H1 (cell line): ENCODE measurements at regions of chr11 and their contacts with region 1.

Region 1: GRCh38 chr11:1694064-1694845 is 2.7 kb upstream of the KRTAP5-6 start:
- DNase-seq: peak; percentile 84 to 98
- H3K4me3 ChIP-seq: peak overlapping the region in 3 of 4 experiments; percentile 29 to 59 (median 45); a peak in 3 of 8 replicates
- H3K27ac ChIP-seq: no peak overlapping the region
- H3K4me1 ChIP-seq: peaks cover 0 to 10% (median 3%) of the 10 kb centered on the region in 4 experiments; a peak in 3 of 7 replicates
- H3K27me3 ChIP-seq: peaks cover 0 to 7% (median 0%) of the 10 kb centered on the region in 4 experiments; a peak in 3 of 7 replicates
- CTCF ChIP-seq: peak; percentile 81 to 97 (median 86)
- EP300 ChIP-seq: peak in 1 of 2 experiments; percentile 49; a peak in 1 of 3 replicates
- POLR2A ChIP-seq: no peak
- RAD21 ChIP-seq: peak; percentile 91 to 95

Region 2: DNA sequence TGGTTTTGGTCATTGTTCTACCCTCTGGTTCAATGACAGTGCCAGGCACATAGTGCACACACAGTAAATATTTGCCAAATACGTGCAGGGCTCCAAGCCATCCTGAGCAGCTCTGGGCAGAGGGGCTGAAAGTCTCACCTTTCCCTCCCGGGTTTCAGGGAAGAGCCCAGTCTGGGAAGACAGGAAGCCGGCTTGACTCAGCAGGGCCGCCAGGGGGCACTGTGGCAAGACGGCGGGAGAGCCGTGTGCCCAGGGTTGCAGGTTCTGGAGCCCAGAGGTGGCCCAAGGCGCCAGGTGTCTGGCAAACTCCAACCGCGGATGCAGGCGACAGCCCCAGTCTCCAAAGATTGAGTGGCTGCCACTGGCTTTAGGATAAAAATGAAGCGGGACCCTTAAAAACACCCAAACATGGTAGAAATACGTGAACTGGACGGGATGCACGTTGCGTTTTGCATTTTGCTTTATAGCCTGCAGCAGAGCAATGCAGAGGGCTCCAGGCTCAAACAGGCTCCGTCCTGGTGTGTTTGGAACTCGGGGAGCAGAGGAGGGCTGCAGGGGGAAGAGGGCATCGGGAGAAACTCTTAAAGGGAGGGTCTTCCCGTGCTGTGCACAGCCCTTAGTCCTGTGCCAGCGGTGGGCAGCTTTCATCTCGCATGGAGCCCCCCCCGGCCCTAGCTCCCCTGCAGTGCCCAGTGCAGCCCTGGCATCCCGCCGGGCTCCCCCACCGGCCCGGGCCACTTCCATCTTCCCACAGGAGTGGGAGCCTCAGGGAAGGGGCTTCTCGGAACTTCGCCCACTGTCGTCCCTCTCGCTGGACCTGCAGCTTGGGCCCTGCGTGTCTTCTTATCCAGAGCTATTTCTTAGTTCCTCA is 53.9 kb before region 1 on chr11:
- CTCF ChIA-PET with region 1: interaction called, 21 read pairs
- POLR2A ChIA-PET with region 1: no interaction called
- DNase-seq: peak; percentile 58 to 87
- H3K4me3 ChIP-seq: no peak overlapping the region
- H3K27ac ChIP-seq: no peak overlapping the region
- H3K4me1 ChIP-seq: no peaks in the 10 kb centered on the region; a peak in 1 of 7 replicates
- H3K27me3 ChIP-seq: no peaks in the 10 kb centered on the region; a peak in 1 of 7 replicates
- CTCF ChIP-seq: peak; percentile 86 to 92 (median 89)
- EP300 ChIP-seq: no peak
- POLR2A ChIP-seq: no peak
- RAD21 ChIP-seq: peak; percentile 42 to 60; a peak in 3 of 4 replicates

Region 3: DNA sequence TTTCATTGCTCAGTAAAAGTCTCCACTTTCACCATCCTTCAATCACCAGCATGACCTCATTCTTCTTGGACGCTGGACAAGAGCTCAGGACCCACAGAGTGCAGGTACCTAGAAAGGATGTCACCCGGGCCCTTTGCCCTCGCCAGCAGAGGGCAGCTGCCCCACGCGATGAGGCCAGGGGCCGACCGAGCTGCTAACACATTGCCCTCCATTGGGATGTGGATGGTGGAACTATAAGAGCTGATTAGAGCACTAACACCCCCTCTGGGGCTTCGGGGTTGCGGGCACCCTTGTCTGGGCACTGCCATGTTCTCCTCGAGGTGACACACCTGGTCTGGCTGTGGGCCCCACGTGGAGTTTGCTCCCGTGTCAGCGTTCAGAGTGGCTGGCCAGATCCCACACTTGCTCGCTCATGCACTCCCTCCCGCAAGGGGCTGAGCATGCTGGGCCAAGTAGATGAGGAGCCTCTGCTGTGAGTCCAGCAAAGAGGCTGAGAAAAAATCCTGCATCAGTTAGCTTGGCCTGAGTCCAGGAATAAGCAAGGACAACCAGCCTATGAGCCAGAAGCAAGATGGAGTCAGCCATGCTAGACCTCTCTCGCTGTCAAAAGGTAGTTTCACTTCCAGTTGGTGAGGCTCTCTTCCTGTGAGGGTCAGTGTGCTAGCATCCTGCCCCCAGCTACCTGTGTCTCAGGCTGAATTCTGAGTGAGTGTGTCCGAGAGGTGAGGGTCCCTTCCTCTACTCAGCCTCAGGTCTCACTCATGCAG is 12.6 kb after region 1 on chr11:
- CTCF ChIA-PET with region 1: interaction called, 16 read pairs
- POLR2A ChIA-PET with region 1: no interaction called
- DNase-seq: no peak
- H3K4me3 ChIP-seq: no peak overlapping the region
- H3K27ac ChIP-seq: no peak overlapping the region
- H3K4me1 ChIP-seq: no peaks in the 10 kb centered on the region
- H3K27me3 ChIP-seq: peaks cover 0 to 5% (median 2%) of the 10 kb centered on the region in 4 experiments; a peak in 1 of 7 replicates
- CTCF ChIP-seq: peak; percentile 74 to 80 (median 80)
- EP300 ChIP-seq: no peak
- POLR2A ChIP-seq: no peak
- RAD21 ChIP-seq: peak; percentile 81 to 83

Region 4: GRCh38 chr11:1772270-1773130 is 78.2 kb after region 1 on chr11:
- CTCF ChIA-PET with region 1: interaction called, 16 read pairs
- POLR2A ChIA-PET with region 1: no interaction called
- DNase-seq: peak in 1 of 2 experiments; percentile 71
- H3K4me3 ChIP-seq: peak overlapping the region in 2 of 4 experiments; percentile 7 to 30; a peak in 1 of 8 replicates
- H3K27ac ChIP-seq: peak overlapping the region; percentile 12; the same call in 1 of the 2 replicates
- H3K4me1 ChIP-seq: peaks cover 5 to 15% (median 11%) of the 10 kb centered on the region in 4 experiments
- H3K27me3 ChIP-seq: no peaks in the 10 kb centered on the region
- CTCF ChIP-seq: no peak
- EP300 ChIP-seq: no peak
- POLR2A ChIP-seq: no peak
- RAD21 ChIP-seq: no peak

Region 5: DNA sequence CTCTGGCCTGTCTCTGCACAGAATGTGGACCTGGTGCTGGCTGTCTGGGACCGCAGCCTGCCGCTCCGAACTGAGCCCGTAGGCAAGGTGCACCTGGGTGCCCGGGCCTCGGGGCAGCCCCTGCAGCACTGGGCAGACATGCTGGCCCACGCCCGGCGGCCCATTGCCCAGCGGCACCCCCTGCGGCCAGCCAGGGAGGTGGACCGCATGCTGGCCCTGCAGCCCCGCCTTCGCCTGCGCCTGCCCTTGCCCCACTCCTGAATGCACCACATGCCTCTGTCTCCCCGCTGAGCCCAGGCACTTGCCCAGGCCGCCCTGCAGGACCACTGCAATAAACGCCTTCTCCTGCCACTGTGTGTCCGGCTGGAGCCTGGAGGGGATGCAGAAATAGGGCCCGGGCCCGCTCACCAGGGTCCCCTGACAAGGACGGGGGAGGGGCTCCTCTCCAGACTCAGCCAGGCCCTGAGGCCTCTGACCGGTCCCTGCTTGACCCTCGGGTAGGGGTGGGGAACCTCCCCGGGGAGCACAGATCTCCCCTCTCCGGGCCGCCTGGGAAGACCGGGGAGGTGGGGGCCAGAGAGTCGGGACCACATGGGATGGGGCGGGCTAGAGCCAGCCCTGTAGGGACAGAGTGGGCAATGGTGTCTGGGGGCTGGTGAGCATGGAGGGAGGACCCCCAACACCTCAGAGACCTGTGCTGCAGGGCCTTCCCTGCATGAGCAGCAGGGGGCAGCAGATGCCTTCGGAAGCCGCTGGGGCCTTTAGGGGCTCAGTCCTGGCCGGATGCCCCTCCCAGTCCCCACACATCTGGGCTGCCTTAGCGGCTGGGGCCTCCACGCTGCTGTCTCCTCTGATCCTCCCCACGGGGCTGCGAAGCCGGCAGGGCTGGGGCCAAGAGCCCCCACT is 143.2 kb after region 1 on chr11:
- CTCF ChIA-PET with region 1: interaction called, 255 read pairs
- POLR2A ChIA-PET with region 1: interaction called, 4 read pairs
- DNase-seq: peak; percentile 50 to 90
- H3K4me3 ChIP-seq: no peak overlapping the region
- H3K27ac ChIP-seq: no peak overlapping the region
- H3K4me1 ChIP-seq: peaks cover 0 to 4% (median 2%) of the 10 kb centered on the region in 4 experiments; a peak in 4 of 7 replicates
- H3K27me3 ChIP-seq: no peaks in the 10 kb centered on the region; a peak in 2 of 7 replicates
- CTCF ChIP-seq: peak; percentile 91 to 94 (median 94)
- EP300 ChIP-seq: no peak
- POLR2A ChIP-seq: no peak
- RAD21 ChIP-seq: peak; percentile 92 to 93

Region 6: DNA sequence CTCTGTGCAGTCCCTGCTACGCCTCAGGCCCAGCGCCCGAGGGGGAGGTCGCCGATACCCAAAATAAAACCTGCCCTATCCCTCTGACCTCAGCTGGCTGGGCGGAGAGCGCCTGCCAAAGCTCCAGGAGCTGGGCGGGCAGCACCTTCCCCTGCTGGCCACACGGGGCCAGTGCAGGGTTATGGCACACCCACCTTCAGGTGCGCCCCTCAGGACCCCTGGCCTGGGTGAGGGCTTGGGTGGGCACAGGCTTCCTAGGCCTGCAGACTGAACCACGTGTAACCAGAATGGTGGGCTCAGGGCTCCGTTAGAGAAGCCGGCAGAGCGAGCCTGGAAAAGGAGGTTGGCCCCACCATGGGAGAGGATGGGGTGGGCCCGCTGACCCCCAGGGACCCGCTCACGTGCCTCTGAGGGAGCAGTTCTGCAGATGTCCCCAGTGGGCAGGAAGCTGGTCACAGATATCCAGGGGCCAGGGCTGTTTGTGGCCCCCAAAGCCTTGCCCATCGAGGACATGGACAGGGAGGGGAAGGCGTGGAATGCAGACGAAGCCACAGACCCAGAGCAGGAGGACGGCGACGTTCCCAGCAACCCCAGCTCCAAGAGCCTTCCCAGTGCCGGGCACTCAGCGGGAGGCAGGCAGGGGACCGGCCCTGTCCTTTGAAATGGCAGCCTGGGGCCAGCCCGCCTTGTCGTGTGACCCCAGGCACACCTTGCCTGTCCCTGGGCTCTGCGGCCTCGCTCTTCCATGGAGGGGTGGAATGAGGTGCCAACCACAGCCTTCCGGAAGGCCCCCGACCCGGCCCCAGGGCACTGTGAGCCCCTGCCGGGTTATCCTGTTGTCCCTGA is 223.6 kb after region 1 on chr11:
- CTCF ChIA-PET with region 1: interaction called, 10 read pairs
- POLR2A ChIA-PET with region 1: no interaction called
- DNase-seq: no peak
- H3K4me3 ChIP-seq: no peak overlapping the region
- H3K27ac ChIP-seq: no peak overlapping the region
- H3K4me1 ChIP-seq: peaks cover 0 to 3% (median 3%) of the 10 kb centered on the region in 4 experiments; a peak in 4 of 7 replicates
- H3K27me3 ChIP-seq: no peaks in the 10 kb centered on the region
- CTCF ChIP-seq: peak; percentile 74 to 80 (median 77)
- EP300 ChIP-seq: no peak
- POLR2A ChIP-seq: no peak
- RAD21 ChIP-seq: peak; percentile 52 to 68